AG04450 (cell line): ENCODE measurements at regions of chr2 and their contacts with region 1.

Region 1: GRCh38 chr2:5803547-5803946 is 111.4 kb downstream of the SOX11 start:
- DNase-seq: peak; percentile 59
- H3K4me3 ChIP-seq: no peak overlapping the region
- H3K27ac ChIP-seq: peak overlapping the region; percentile 65
- H3K27me3 ChIP-seq: no peaks in the 10 kb centered on the region
- CTCF ChIP-seq: no peak

Region 2: GRCh38 chr2:5791371-5791770 is 12.2 kb before region 1 on chr2:
- CTCF ChIA-PET with region 1: no interaction called
- POLR2A ChIA-PET with region 1: no interaction called
- DNase-seq: no peak
- H3K4me3 ChIP-seq: no peak overlapping the region
- H3K27ac ChIP-seq: no peak overlapping the region
- H3K27me3 ChIP-seq: no peaks in the 10 kb centered on the region
- CTCF ChIP-seq: no peak

Region 3: DNA sequence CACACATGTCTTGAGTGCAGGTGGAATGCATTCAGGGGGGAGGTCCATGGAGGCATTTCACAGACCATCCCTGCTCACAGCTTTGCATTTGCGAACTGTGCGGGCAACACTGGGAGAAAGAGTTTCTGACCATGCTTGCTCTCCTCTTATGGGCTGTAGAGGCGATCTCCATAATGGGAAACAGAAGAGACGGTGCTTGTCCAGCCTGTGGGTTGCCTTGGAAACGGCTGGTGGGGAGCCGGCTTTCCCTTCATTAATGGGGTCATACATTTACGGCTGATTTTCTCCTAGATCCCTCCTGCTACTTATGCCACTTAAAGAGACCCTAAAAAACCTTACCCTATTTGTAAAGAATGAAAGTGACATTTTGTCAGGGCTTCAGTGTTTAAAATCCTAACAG is 36.0 kb after region 1 on chr2:
- CTCF ChIA-PET with region 1: interaction called, 11 read pairs
- POLR2A ChIA-PET with region 1: no interaction called
- DNase-seq: no peak
- H3K4me3 ChIP-seq: no peak overlapping the region
- H3K27ac ChIP-seq: no peak overlapping the region
- H3K27me3 ChIP-seq: no peaks in the 10 kb centered on the region
- CTCF ChIP-seq: no peak